ENCODE measurements at regions of chr6 and their contacts with region 1.

Region 1: DNA sequence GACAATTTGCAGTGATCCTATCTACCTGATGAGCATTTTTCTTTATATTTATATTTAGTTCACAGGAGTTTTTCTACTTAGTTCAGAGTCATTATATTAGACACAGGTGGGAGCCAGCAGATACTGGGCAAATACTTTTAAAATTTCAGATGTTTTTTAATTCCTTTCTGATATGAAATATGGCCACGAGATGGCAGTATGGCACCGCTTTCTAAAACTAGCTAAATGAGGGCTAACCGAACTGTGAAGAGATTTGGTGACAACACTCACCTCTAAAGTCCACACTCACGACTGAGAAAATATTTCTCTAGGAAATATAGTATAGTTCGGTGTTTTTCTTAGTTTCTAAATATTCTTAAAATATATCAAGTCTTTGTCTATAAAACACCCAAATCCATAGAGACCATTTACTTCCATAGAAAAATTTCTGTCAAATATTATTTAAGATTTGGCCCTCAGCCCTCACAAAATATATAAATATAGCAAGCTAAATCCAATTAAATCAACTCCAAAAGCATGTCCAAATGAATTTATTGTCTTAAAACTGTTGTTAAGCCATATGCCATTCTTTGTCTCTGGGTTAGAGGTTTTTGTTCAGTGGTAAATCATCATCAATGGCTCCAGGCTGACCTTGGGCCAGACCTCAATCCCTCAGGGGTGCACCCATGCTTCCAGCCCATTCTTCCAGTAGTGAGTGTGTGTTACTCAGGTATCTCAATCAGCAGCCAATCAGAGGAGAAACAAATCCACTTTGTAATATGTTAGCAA is 63.6 kb downstream of the HUS1B start:
- DNase-seq: peak; percentile 78
- H3K4me3 ChIP-seq: no peak overlapping the region
- H3K27ac ChIP-seq: no peak overlapping the region
- H3K4me1 ChIP-seq: no peaks in the 10 kb centered on the region
- CTCF ChIP-seq: peak; percentile 95

Region 2: GRCh38 chr6:188821-189655 is 404.3 kb before region 1 on chr6:
- CTCF ChIA-PET with region 1: no interaction called
- POLR2A ChIA-PET with region 1: no interaction called
- intact Hi-C with region 1: loop called (anchors 2 kb)
- DNase-seq: peak; percentile 89
- H3K4me3 ChIP-seq: no peak overlapping the region
- H3K27ac ChIP-seq: peak overlapping the region; percentile 24
- H3K4me1 ChIP-seq: peaks cover 87% of the 10 kb centered on the region
- CTCF ChIP-seq: peak; percentile 98

Region 3: DNA sequence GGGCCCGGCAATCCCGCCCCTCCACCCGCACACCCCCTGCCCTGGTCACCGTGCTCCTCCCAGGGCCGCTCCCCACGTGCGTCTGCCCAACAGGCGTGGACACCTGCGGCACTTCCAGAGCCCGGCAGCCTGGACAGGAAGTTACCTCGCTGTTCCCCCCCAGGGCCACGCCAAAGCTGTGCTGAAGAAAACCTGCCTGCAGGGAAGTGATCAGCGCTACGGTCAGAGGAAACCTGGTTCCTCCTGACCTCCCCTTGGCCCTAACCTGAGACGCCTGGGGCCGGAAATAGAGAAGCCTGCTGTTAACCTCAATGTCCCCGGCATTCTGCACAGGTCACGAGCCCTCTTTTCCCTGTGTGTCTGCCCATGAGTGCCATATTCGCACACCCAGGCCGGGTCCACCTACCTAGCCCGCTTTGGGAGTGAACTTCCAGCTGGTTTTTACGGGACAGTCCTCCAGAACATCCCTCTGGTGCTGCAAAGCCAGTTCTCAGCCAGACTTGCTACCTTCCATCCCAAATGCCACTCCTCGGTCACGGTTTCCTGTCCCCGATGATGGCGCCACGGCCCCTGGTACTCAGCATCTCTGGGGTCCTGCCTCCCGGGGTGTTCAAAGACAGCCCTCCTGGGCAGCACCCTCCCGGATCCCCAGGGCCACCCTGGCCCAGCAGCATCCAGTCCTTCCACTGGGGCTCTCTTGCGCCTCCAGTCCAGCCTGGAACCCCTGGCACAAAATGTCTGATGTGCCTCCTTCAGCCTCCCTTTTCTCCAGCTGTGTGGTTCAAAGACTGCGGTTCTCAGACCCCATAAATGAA is 213.7 kb before region 1 on chr6:
- CTCF ChIA-PET with region 1: no interaction called
- POLR2A ChIA-PET with region 1: no interaction called
- intact Hi-C with region 1: no loop called
- DNase-seq: no peak
- H3K4me3 ChIP-seq: no peak overlapping the region
- H3K27ac ChIP-seq: no peak overlapping the region
- H3K4me1 ChIP-seq: peaks cover 41% of the 10 kb centered on the region
- CTCF ChIP-seq: no peak

Region 4: GRCh38 chr6:701700-702479 is 108.6 kb after region 1 on chr6:
- CTCF ChIA-PET with region 1: interaction called, 3 read pairs
- POLR2A ChIA-PET with region 1: no interaction called
- intact Hi-C with region 1: loop called (anchors 5 kb)
- DNase-seq: peak; percentile 22
- H3K4me3 ChIP-seq: no peak overlapping the region
- H3K27ac ChIP-seq: no peak overlapping the region
- H3K4me1 ChIP-seq: no peaks in the 10 kb centered on the region
- CTCF ChIP-seq: peak; percentile 53

Region 5: GRCh38 chr6:722077-722524 is 128.8 kb after region 1 on chr6:
- CTCF ChIA-PET with region 1: no interaction called
- POLR2A ChIA-PET with region 1: no interaction called
- intact Hi-C with region 1: loop called (anchors 2 kb)
- DNase-seq: peak; percentile 77
- H3K4me3 ChIP-seq: no peak overlapping the region
- H3K27ac ChIP-seq: no peak overlapping the region
- H3K4me1 ChIP-seq: peaks cover 10% of the 10 kb centered on the region
- CTCF ChIP-seq: peak; percentile 99

Region 6: GRCh38 chr6:786946-787763 is 193.8 kb after region 1 on chr6:
- CTCF ChIA-PET with region 1: interaction called, 4 read pairs
- POLR2A ChIA-PET with region 1: interaction called, 4 read pairs
- intact Hi-C with region 1: loop called (anchors 1 kb)
- DNase-seq: peak; percentile 35
- H3K4me3 ChIP-seq: no peak overlapping the region
- H3K27ac ChIP-seq: no peak overlapping the region
- H3K4me1 ChIP-seq: no peaks in the 10 kb centered on the region
- CTCF ChIP-seq: peak; percentile 83

Region 7: GRCh38 chr6:1396952-1397868 is 803.9 kb after region 1 on chr6:
- CTCF ChIA-PET with region 1: interaction called, 3 read pairs
- POLR2A ChIA-PET with region 1: no interaction called
- intact Hi-C with region 1: loop called (anchors 5 kb)
- DNase-seq: peak; percentile 65
- H3K4me3 ChIP-seq: no peak overlapping the region
- H3K27ac ChIP-seq: no peak overlapping the region
- H3K4me1 ChIP-seq: no peaks in the 10 kb centered on the region
- CTCF ChIP-seq: peak; percentile 95